ENCODE measurements at regions of chr1 and their contacts with region 1.

Region 1: DNA sequence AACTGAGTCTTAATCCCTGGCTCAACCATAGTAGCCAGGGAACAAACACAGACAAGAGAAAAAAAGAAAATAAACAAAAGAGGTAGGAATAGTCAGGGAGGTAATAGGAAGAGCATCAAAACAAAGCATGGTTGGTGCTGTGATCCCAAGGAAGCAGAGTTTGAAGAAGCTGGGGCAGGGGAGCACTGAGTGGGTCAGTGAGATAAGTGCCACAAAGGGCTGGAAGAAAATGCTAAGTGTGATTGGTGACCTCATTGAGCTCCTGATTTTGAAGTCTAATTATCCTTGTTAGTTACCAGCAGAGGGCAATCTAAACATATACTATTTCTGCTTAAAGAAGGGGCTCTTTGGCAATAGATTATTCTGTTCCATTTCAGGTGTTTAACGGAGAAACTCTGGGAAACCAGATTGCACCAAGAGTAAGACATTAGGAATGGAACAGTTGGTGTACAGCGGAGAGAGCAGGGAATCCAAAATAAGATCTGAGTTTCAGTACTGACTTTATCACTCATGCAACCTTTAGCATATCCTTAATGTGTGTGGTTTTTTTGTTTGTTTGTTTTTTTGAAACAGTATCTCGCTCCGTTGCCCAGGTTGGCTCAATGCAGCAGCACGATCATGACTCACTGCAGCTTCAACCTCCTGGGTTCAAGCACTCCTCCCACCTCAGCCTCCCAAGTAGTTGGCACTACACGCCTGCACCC is 30.7 kb upstream of the KIAA1614 start:
- DNase-seq: peak in 1 of 2 experiments; percentile 67
- H3K4me3 ChIP-seq: no peak overlapping the region
- H3K4me1 ChIP-seq: no peaks in the 10 kb centered on the region
- H3K27me3 ChIP-seq: no peaks in the 10 kb centered on the region

Region 2: DNA sequence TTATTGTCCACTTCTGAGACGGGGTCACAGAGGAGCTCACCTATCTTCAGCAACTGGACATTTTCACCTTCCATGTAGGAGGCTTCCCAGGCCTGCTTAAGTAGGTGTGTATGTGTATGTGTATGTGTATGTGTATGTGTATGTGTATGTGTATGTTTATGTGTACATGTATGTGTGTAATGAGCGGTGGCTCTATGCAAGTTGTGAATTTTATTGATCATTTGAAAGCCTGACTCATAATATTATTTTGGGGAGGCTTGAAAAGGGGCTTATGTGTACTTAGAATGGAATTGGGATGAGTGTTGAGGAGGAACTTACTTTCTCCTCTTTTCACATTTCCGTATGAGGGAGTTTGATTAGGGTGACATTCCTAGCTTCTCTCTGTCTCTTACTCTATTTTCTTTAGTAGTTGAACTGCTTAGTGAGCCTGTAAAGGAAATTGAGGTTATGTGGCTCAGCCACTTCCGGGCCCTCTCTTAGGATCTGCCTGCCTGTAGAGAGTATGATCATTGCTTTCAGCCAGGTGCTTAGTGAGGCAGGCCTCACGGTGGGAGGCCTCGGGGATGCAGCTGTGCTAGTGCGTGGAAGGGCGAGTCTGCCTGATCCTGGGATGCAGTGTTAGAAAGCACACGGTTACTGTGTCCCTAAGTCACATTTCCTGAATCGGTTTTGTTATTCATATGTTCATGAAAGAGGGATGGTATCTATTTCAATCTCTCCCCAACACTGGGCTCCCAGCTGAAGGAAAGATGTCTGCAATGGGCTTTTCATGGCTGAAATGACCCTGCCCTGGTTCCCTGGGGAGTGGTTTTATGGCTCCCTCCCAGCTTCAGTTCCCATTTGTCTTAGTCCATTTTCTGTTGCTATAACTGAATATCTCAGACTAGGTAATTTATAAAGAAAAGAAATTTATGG is 267.6 kb after region 1 on chr1:
- in situ Hi-C with region 1: loop called (anchors 5 kb)
- DNase-seq: no peak
- H3K4me3 ChIP-seq: no peak overlapping the region
- H3K4me1 ChIP-seq: no peaks in the 10 kb centered on the region
- H3K27me3 ChIP-seq: no peaks in the 10 kb centered on the region

Region 3: DNA sequence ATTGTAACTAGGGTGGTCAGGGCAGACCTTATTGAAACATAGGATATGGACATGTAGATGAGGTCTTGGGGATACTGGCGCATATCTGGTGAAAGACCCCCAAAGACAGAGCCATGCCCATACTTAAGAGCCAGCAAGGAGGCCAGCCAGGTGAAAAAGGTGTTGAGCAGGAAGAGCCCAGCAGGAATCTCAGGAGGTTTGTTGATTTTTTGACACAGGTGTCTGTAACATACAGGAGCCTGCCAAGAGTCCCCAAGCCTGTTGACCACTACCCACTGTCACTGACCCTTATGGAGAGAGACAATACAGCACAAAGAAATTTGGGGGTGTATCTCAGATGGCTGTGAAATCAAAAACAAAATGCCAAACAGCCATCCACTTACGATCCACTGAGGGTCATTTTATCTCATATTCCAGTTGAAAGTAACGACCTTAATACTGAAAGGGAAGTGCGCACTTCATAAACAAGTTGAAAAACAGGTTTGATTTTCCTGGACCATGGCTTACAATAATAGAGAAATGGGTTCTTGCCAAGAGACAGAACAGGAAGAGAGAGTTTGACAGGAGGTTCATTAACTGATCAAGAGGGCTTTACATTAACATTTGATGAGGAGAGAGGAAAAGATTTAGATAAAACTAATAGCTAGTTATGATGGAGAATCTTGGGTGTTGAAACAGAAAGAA is 1346.0 kb after region 1 on chr1:
- in situ Hi-C with region 1: no loop called
- DNase-seq: no peak
- H3K4me3 ChIP-seq: no peak overlapping the region
- H3K4me1 ChIP-seq: no peaks in the 10 kb centered on the region
- H3K27me3 ChIP-seq: no peaks in the 10 kb centered on the region